A673 (cell line): ENCODE measurements at regions of chr15 and their contacts with region 1.

Region 1: GRCh38 chr15:90529371-90530249 is at the start of gene CRTC3:
- DNase-seq: peak; percentile 69
- H3K4me3 ChIP-seq: peak within 1 kb of the TSS; percentile 83
- H3K27ac ChIP-seq: peak within 1 kb of the TSS; percentile 80
- H3K4me1 ChIP-seq: peaks cover 11% of the 10 kb centered on the region
- H3K27me3 ChIP-seq: no peaks in the 10 kb centered on the region
- CTCF ChIP-seq: no peak; the same call in 1 of the 2 replicates
- total RNA-seq, gene CRTC3: 34.6 and 35.3 TPM in 2 replicates

Region 2: DNA sequence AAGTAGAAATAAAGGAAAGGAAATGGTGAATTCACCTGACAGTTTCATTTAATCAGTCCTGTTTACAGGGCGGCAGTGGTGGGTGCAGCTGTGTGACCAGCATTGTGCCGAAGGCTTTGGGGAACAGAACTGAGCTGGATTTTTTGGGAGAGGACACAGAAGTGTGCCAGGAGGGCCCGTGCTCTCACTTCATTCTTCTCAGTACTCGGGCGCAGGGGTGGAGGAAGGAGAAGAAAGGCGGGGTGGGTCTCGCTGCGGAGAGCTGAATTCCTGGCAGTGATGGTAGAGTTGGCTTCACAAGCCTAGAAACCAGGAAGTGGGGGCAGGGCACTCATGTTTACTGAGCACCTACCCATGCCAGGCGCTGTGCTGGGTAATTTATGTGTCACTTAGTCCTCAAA is 64.7 kb after region 1 on chr15:
- CTCF ChIA-PET with region 1: no interaction called
- POLR2A ChIA-PET with region 1: no interaction called
- intact Hi-C with region 1: loop called (anchors 5 kb)
- DNase-seq: peak; percentile 65
- H3K4me3 ChIP-seq: no peak overlapping the region
- H3K27ac ChIP-seq: peak overlapping the region; percentile 44
- H3K4me1 ChIP-seq: peaks cover 30% of the 10 kb centered on the region
- H3K27me3 ChIP-seq: no peaks in the 10 kb centered on the region
- CTCF ChIP-seq: no peak